Activated CD4-positive, alpha-beta memory T cell treated with anti-CD3 and anti-CD28 coated beads, Interleukin-2, amount 10 ng/mL, durations not matched to agents 7 days and 5 days (primary cell): ENCODE measurements at regions of chr1 and their contacts with region 1.

Region 1: DNA sequence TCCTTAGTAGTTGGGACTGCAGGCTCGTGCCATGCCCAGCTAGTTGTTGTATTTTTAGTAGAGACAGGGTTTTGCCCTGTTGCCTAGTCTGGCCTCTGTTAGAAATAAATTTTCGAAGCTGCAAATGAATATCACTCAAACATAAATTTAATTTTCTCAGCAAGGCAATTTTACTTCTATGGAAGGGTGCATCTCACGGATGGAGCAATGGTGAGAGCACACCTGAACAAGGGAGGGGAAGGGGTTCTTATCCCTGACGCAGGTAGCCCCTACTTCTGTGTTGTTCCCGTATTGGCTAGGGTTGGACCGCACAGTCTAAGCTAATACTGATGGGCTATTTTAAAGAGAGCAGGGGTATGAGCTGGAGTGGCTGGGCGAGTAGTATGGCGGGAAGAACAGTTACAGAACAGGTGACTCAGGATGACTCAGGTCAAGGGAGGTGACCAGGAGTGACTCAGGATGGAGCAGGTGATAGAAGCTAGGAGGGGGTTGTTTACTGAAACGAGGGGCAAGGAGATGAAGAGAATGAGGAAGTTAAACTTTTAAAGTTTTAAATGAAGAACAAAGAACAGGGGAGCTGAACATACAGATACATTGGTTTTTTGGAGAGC is 7.5 kb downstream of the MDM4 start:
- DNase-seq: no peak
- H3K4me3 Mint-ChIP-seq: no peak overlapping the region
- H3K27ac Mint-ChIP-seq: peak overlapping the region; percentile 7
- H3K4me1 Mint-ChIP-seq: peaks cover 42% of the 10 kb centered on the region
- H3K27me3 Mint-ChIP-seq: no peaks in the 10 kb centered on the region

Region 2: DNA sequence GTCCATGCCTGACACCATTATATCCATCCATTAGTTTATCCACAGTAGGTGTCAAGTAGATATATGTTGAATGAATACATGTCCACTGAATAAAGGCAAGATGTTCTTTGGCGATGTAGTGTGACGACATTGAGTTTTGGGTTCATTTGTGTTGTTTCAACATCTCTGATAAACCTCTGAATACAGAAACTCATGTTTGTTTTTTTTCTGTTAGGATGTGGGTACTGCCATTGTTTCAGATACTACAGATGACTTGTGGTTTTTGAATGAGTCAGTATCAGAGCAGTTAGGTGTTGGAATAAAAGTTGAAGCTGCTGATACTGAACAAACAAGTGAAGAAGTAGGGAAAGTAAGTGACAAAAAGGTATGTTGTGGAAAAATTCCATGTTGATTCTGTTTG is 20.6 kb after region 1 on chr1:
- CTCF ChIA-PET with region 1: interaction called, 3 read pairs
- POLR2A ChIA-PET with region 1: interaction called, 73 read pairs
- DNase-seq: no peak
- H3K4me3 Mint-ChIP-seq: peak overlapping the region; percentile 33
- H3K27ac Mint-ChIP-seq: peak overlapping the region; percentile 86
- H3K4me1 Mint-ChIP-seq: peaks cover 54% of the 10 kb centered on the region
- H3K27me3 Mint-ChIP-seq: no peaks in the 10 kb centered on the region

Region 3: DNA sequence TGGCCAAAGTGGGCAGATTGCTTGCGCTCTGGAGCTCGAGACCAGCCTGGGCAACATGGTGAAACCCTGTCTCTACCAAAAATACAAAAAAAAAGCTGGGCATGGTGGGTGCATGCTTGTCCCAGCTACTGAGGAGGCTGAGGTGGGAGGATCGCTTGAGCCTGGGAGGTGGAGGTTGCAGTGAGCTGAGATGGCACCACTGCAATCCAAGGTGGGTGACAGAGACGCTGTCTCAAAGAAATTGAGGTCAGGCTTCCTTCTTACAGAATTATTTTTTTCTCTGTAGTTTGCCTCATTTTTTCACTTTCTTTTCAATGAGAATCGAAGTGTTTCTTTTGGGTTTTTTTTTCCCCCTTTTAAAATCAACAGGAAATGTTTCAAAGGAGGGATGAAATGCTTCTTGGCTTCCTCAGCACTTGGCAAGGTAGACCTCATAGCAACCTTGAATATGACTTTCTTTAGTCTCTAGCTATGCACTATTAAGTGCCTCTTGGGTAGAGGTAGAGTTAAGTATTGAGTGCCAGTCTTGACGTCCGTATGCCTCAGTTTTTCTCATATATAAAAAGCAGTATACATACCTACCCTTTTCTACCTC is 32.8 kb after region 1 on chr1:
- CTCF ChIA-PET with region 1: no interaction called
- POLR2A ChIA-PET with region 1: no interaction called
- DNase-seq: no peak
- H3K4me3 Mint-ChIP-seq: no peak overlapping the region
- H3K27ac Mint-ChIP-seq: no peak overlapping the region
- H3K4me1 Mint-ChIP-seq: peaks cover 13% of the 10 kb centered on the region
- H3K27me3 Mint-ChIP-seq: no peaks in the 10 kb centered on the region